ENCODE measurements at regions of chr1 and their contacts with region 1.

Region 1: DNA sequence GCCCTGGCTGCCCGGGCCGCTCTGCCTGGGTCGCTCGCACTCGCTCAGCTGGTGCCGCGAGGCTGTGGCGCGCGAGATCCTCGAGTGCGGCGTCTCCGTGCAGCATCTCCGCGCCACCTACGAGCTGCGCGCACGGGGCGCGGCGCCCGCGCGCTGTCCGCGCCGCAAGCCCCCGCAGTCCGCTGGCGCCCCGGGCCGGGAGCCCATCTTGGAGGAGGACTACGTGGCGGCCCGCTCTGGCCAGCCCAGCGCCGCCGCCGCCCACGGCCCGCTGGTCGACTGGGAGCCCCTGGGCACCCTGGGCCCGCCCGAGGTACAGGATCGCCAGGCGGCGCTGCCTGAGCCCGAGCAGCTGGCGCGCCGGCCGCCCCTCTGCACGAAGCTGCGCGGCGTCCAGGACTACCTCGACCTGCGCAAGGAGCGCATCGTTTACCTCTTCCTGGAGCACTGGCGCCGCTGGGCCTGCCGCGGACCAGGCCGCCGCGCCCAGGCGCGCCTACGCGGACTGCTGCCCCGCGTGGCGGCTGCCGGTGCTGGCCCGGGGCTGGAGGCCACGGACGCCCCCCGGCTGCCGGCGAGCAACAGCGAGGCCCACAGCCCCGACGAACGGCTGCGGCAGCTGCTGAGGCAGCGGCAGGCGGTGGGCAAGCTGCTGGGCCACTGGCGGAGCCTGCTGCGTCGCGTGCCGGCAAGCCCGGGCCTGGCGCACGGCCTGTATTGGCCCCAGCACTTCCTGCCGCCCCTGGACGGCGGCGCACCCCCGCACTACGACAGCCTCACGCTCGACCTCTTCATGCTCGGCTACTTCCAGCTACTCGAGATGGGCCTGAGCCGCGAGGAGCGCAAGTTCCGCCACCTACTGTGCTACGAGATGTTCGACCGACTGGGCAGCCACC is 10.9 kb downstream of the TNFRSF25 start:
- DNase-seq: peak; percentile 49
- H3K4me3 Mint-ChIP-seq: no peak overlapping the region
- H3K27ac Mint-ChIP-seq: no peak overlapping the region
- H3K4me1 Mint-ChIP-seq: peaks cover 18% of the 10 kb centered on the region
- H3K27me3 Mint-ChIP-seq: peaks cover 25% of the 10 kb centered on the region

Region 2: GRCh38 chr1:6438047-6438525 is 17.0 kb before region 1 on chr1:
- CTCF ChIA-PET with region 1: interaction called, 44 read pairs
- POLR2A ChIA-PET with region 1: interaction called, 4 read pairs
- intact Hi-C with region 1: no loop called
- DNase-seq: peak; percentile 82
- H3K4me3 Mint-ChIP-seq: no peak overlapping the region
- H3K27ac Mint-ChIP-seq: no peak overlapping the region
- H3K4me1 Mint-ChIP-seq: peaks cover 6% of the 10 kb centered on the region
- H3K27me3 Mint-ChIP-seq: peaks cover 19% of the 10 kb centered on the region